Activated B cell treated with CpG ODN at 0.5 μM for 24 hours (primary cell): ENCODE measurements at regions of chr15 and their contacts with region 1.

Region 1: GRCh38 chr15:70240082-70240481 is 142.4 kb upstream of the TLE3 start:
- DNase-seq: no peak
- ATAC-seq: peak; percentile 97
- H3K4me3 Mint-ChIP-seq: peak overlapping the region; percentile 39
- H3K27ac Mint-ChIP-seq: peak overlapping the region; percentile 62
- H3K4me1 Mint-ChIP-seq: peaks cover 49% of the 10 kb centered on the region
- H3K27me3 Mint-ChIP-seq: no peaks in the 10 kb centered on the region
- CTCF ChIP-seq: no peak

Region 2: GRCh38 chr15:70023064-70023768 is 216.9 kb before region 1 on chr15:
- CTCF ChIA-PET with region 1: no interaction called
- POLR2A ChIA-PET with region 1: no interaction called
- intact Hi-C with region 1: no loop called
- DNase-seq: no peak
- ATAC-seq: peak; percentile 76
- H3K4me3 Mint-ChIP-seq: peak overlapping the region; percentile 21
- H3K27ac Mint-ChIP-seq: peak overlapping the region; percentile 75
- H3K4me1 Mint-ChIP-seq: peaks cover 46% of the 10 kb centered on the region
- H3K27me3 Mint-ChIP-seq: peaks cover 2% of the 10 kb centered on the region
- CTCF ChIP-seq: no peak

Region 3: GRCh38 chr15:70196314-70197291 is 43.5 kb before region 1 on chr15:
- CTCF ChIA-PET with region 1: no interaction called
- POLR2A ChIA-PET with region 1: interaction called, 16 read pairs
- intact Hi-C with region 1: loop called (anchors 1 kb)
- DNase-seq: peak; percentile 62
- ATAC-seq: peak; percentile 82
- H3K4me3 Mint-ChIP-seq: peak overlapping the region; percentile 55
- H3K27ac Mint-ChIP-seq: peak overlapping the region; percentile 79
- H3K4me1 Mint-ChIP-seq: peaks cover 58% of the 10 kb centered on the region
- H3K27me3 Mint-ChIP-seq: peaks cover 7% of the 10 kb centered on the region
- CTCF ChIP-seq: no peak

Region 4: GRCh38 chr15:70264014-70264582 is 24.0 kb after region 1 on chr15:
- CTCF ChIA-PET with region 1: no interaction called
- POLR2A ChIA-PET with region 1: interaction called, 10 read pairs
- intact Hi-C with region 1: loop called (anchors 1 kb)
- DNase-seq: no peak
- ATAC-seq: peak; percentile 51
- H3K4me3 Mint-ChIP-seq: peak overlapping the region; percentile 57
- H3K27ac Mint-ChIP-seq: peak overlapping the region; percentile 18
- H3K4me1 Mint-ChIP-seq: peaks cover 92% of the 10 kb centered on the region
- H3K27me3 Mint-ChIP-seq: no peaks in the 10 kb centered on the region
- CTCF ChIP-seq: no peak

Region 5: DNA sequence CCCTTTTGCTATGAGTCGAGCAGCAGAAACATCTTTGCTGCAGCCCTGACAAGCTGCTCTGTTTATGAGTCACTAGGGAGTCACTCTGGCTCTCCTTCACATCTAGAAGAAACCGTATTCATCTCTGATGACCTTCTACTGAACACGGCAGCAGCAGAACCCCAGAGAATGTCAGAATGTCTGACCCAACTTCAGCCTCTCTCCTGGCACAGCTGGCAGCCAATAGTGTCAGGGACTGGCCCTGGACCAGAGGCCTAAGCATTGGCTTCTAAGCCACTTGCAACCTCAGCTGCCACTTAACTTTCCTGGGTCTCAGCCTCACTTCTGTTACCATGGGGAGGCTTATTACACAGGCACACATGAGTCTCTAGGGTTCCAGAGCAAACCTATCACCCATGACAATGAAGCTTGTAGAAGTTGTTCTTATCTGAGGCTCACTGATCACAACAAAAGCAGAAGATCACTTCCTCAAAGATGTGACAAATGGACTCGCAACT is 41.8 kb after region 1 on chr15:
- CTCF ChIA-PET with region 1: no interaction called
- POLR2A ChIA-PET with region 1: interaction called, 4 read pairs
- intact Hi-C with region 1: loop called (anchors 1 kb)
- DNase-seq: peak; percentile 53
- ATAC-seq: peak; percentile 88
- H3K4me3 Mint-ChIP-seq: peak overlapping the region; percentile 33
- H3K27ac Mint-ChIP-seq: peak overlapping the region; percentile 94
- H3K4me1 Mint-ChIP-seq: peaks cover 55% of the 10 kb centered on the region
- H3K27me3 Mint-ChIP-seq: no peaks in the 10 kb centered on the region
- CTCF ChIP-seq: no peak

Region 6: DNA sequence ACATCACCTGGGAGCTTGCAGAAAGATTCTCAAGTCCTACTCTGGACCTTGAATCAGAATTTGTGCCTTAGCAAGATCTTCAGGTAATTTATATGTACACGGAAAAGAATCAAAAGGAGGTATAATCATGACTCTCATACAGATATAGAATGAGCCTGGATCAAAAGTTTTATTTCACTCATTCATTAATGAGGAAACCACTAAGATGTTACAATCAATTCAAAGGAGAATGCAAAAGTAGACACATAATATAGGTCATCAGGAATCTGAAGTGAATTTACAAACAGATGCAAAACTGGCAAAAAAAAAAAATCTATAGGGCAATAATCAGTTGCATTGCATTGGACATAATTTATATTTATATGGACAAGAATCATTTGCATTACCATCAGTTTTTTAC is 53.1 kb after region 1 on chr15:
- CTCF ChIA-PET with region 1: no interaction called
- POLR2A ChIA-PET with region 1: no interaction called
- intact Hi-C with region 1: no loop called
- DNase-seq: no peak
- ATAC-seq: no peak
- H3K4me3 Mint-ChIP-seq: no peak overlapping the region
- H3K27ac Mint-ChIP-seq: no peak overlapping the region
- H3K4me1 Mint-ChIP-seq: peaks cover 2% of the 10 kb centered on the region
- H3K27me3 Mint-ChIP-seq: no peaks in the 10 kb centered on the region
- CTCF ChIP-seq: no peak

Region 7: DNA sequence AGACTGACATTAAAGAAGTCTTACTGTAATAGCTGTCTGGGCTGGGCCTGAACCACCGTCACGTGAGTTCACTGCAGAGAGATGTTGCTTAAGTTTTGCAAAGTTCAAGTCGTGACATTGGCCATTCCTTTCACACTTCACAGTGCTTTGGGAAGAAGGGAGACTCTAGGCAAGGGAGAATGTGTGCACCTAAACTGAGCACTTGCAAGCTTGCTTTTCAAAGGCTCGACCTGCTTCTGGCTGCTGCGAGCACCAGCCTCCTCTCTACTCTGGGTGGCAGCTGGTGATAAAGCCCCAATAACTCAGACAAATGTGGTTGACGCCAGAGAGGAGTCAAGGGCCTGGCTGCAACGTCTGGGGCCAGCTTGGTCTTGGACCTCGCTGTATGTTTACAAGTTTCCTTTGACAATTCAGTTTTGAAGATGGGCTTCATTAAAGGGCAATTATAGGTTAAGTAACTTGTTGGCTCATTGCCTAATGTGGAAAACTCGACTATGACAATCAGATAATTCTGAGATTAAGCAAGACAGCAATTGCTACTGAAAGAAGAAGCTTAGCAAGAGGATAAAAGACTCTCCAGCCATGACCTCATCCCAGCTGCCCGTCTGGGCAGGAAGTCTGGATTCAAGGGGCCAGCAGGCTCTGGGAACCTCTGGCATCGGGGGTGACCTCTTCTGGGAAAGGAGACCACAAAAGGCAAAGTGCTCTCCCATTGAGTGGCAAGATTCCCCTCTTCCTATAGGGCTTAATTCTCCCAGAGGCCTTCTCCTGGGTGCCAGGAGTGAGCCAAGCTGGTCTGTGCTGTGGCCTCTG is 99.8 kb after region 1 on chr15:
- CTCF ChIA-PET with region 1: no interaction called
- POLR2A ChIA-PET with region 1: no interaction called
- intact Hi-C with region 1: no loop called
- DNase-seq: no peak
- ATAC-seq: no peak
- H3K4me3 Mint-ChIP-seq: no peak overlapping the region
- H3K27ac Mint-ChIP-seq: no peak overlapping the region
- H3K4me1 Mint-ChIP-seq: peaks cover 17% of the 10 kb centered on the region
- H3K27me3 Mint-ChIP-seq: no peaks in the 10 kb centered on the region
- CTCF ChIP-seq: no peak